Natural killer cell (primary cell): ENCODE measurements at regions of chr10 and their contacts with region 1.

Region 1: DNA sequence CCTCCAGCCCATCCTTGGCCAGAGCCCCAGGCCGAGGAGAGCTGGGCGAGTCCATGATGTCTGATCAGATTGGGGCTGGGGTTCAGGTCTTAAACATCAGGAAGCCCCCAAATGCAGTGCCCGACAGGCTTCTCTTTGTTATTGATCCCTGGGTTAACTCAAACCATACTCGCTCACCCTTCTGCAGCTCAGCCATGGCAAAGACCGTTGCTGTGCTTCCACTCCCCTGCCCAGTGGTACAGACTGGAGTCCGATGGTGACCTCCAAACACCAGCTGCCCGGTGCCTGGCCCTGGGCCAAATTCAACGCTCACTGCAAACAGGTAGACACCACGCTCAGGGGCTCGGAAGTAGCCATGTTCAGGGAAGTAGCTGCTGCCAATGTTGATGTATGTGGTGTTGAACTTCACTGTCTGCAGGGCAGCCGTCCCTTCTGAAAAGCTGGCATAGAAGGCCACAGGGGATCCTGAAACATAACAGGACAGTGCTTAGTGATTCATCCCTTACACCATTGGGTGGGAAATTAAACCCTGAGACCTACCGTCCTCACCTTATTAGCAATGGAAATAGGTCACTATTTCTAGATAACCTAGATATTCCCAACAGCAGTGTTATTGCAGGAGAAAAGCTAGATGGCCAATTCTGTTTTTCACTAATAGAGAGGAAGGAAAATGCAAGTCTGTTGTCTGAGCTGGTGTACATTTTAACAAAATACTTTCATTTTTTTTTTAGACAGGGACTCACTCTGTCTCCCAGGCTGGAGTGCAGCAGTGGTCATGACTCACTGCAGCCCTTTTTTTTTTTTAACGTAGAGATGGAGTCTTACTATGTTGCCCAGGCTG is 20.5 kb downstream of the MMRN2 start:
- DNase-seq: no peak
- ATAC-seq: no peak
- H3K4me3 ChIP-seq: no peak overlapping the region
- H3K4me3 Mint-ChIP-seq: no peak overlapping the region
- H3K27ac ChIP-seq: no peak overlapping the region
- H3K27ac Mint-ChIP-seq: no peak overlapping the region
- H3K4me1 ChIP-seq: peaks cover 7% of the 10 kb centered on the region
- H3K4me1 Mint-ChIP-seq: peaks cover 3 to 6% of the 10 kb centered on the region in 2 donors
- H3K27me3 ChIP-seq: no peaks in the 10 kb centered on the region
- H3K27me3 Mint-ChIP-seq: no peaks in the 10 kb centered on the region
- CTCF ChIP-seq: no peak

Region 2: DNA sequence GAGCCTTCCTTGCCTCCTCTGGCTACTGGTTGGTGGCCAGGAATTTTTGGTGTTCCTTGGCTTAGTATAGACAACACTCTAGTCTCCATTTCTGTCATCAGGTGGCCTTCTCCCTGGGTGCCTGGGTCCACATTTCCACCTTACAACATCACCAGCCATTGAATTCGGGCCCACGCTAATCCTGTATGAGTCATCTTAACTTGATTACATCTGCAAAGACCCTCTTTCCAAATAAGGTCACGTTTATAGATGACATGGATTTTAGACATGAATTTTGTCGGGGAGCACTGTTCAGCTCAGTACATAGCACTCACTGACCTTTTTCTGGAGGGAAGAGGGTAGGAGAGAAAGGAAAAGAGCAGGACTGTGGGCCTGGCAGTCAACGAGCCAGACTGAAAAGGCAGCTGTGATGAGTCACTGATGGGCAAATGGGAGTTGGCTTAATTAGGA is 18.8 kb before region 1 on chr10:
- intact Hi-C with region 1: no loop called
- DNase-seq: no peak
- ATAC-seq: no peak
- H3K4me3 ChIP-seq: no peak overlapping the region
- H3K4me3 Mint-ChIP-seq: no peak overlapping the region
- H3K27ac ChIP-seq: no peak overlapping the region
- H3K27ac Mint-ChIP-seq: no peak overlapping the region
- H3K4me1 ChIP-seq: no peaks in the 10 kb centered on the region
- H3K4me1 Mint-ChIP-seq: no peaks in the 10 kb centered on the region
- H3K27me3 ChIP-seq: no peaks in the 10 kb centered on the region
- H3K27me3 Mint-ChIP-seq: no peaks in the 10 kb centered on the region
- CTCF ChIP-seq: no peak

Region 3: DNA sequence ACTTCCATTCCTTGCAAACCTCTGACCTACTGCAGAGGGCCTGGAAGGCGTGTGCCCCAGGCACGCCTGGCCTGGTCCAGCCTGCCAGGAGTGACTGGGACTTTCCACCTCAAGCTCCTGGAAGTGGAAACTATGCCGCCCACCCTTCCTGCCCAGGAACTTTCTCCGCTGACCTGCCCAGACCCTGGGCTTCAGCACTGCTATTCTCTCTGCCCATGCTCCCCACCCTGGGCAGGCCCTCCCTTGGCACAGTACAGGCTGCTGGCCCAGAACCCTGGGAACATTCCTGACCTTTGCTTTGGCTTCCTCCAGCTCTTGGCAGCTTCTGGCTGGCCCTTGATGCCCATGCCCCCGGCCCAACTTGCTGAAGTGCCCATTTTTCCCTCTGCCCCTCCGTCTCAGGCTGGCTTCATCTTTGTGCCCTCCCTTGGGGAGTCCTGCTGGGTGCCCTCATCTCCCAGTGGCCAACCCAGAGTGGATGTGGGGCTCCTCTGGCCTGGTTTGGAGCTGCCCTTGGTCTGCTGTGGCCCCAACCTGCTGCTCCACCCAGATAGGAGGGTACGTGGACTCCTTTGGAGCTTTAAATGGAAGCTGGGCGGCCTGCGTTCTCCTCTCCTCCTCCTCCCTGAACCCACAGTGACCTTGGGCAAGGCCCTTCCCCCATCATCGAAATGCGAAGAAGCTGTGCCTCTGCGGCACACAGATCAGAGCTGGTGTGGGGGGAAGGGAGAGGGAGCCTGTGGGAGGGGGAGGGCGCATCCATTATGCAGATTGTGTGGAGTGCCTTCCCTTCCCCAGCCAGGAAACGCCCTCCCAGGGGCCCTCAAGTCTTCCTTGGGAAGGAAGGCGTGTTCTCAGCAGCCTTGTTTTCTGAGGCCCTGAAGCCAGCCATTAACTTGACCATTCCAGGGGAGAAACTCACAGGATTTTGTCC is 17.1 kb after region 1 on chr10:
- intact Hi-C with region 1: no loop called
- DNase-seq: no peak
- ATAC-seq: no peak
- H3K4me3 ChIP-seq: no peak overlapping the region
- H3K4me3 Mint-ChIP-seq: no peak overlapping the region
- H3K27ac ChIP-seq: no peak overlapping the region
- H3K27ac Mint-ChIP-seq: no peak overlapping the region
- H3K4me1 ChIP-seq: peaks cover 7% of the 10 kb centered on the region
- H3K4me1 Mint-ChIP-seq: peaks cover 0 to 5% of the 10 kb centered on the region in 2 donors
- H3K27me3 ChIP-seq: no peaks in the 10 kb centered on the region
- H3K27me3 Mint-ChIP-seq: no peaks in the 10 kb centered on the region
- CTCF ChIP-seq: no peak

Region 4: DNA sequence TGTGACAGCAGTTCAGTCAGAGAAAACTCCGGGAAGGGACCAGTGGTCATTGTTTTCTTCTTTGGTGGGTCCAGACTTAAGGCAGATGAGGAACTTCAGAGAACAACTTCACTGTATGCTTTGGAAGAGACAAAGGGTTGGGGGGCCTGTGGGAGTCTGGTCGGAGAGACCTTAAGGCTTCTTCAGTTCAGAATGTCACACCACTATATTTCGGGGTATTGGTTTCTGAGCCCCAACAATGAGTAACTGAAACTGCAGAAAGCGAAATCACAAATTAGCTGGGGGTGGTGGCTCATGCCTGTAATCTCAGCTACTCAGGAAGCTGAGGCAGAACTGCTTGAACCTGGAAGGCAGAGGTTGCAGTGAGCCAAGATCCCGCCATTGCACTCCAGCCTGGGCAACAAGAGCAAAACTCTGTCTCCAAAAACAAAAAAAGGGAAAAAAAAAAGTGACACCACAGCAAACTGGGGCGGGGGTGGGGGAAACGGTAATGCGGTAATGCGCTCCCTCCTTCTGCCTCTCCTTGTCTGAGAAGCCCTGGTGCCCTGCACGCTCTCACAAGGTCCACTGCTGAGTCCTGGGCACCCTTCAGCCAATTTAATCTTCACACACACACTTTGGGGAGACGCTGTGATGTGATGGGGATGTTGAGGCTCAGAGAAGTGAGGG is 29.2 kb after region 1 on chr10:
- intact Hi-C with region 1: loop called (anchors 1 kb)
- DNase-seq: no peak
- ATAC-seq: no peak
- H3K4me3 ChIP-seq: no peak overlapping the region
- H3K4me3 Mint-ChIP-seq: peak overlapping the region; percentile 49
- H3K27ac ChIP-seq: no peak overlapping the region
- H3K27ac Mint-ChIP-seq: peak overlapping the region in 1 of 2 donors; percentile 53
- H3K4me1 ChIP-seq: peaks cover 50% of the 10 kb centered on the region
- H3K4me1 Mint-ChIP-seq: peaks cover 10 to 29% of the 10 kb centered on the region in 2 donors
- H3K27me3 ChIP-seq: no peaks in the 10 kb centered on the region
- H3K27me3 Mint-ChIP-seq: no peaks in the 10 kb centered on the region
- CTCF ChIP-seq: no peak